ENCODE measurements at regions of chr11 and their contacts with region 1.

Region 1: GRCh38 chr11:118907051-118908042 is 18.4 kb downstream of the BCL9L start:
- DNase-seq: peak; percentile 98
- H3K4me3 ChIP-seq: no peak overlapping the region
- H3K27ac ChIP-seq: peak overlapping the region; percentile 90 to 98 (median 96)
- H3K4me1 ChIP-seq: peaks cover 54 to 77% (median 63%) of the 10 kb centered on the region in 4 donors
- H3K27me3 ChIP-seq: no peaks in the 10 kb centered on the region
- CTCF ChIP-seq: peak; percentile 93 to 97 (median 95)
- EP300 ChIP-seq: no peak
- POLR2A ChIP-seq: no peak

Region 2: DNA sequence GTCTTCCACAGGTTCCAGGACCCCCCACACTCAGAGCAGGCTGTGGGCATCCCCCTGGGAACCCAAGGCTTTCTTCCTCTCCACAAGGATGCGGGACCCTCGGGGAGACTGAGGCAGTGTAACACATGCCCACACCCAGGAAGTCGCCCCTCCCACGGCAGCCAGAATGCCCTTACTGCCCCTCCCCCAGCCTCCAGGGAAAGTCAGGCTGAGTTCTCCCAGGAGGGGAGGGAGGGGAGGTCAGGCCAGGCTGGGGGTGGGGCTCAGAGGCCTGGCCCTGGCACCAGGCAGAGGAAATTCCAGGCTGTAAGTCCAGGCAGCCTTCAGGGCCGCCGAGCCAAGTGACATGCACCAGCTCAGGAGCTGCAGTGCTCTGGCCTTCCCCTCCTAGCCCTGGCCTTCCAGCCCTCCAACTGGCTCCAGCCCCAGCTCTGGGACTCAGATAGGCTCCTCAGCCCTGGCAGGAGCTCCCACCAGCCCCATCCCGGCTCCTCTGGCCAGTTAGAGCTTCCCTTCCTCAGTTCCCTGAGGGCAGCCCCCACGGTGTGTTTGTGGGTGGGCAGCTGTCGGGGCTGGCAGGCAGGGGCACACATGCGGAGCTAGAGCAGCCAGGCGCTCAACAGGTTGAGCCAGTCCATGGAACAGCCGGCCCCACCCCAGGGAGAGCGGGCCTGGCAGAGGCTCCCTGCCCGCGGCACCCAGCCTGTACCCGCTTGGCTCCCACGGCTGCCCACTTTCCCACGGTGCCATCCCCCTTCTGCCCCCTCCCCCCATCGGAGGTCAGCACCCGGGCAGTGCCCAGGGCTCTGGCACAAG is 14.8 kb after region 1 on chr11:
- intact Hi-C with region 1: loop called (anchors 1 kb)
- DNase-seq: no peak
- H3K4me3 ChIP-seq: peak overlapping the region; percentile 93 to 97 (median 94)
- H3K27ac ChIP-seq: peak overlapping the region; percentile 90 to 98 (median 96)
- H3K4me1 ChIP-seq: peaks cover 76 to 87% (median 84%) of the 10 kb centered on the region in 4 donors
- H3K27me3 ChIP-seq: no peaks in the 10 kb centered on the region
- CTCF ChIP-seq: no peak
- EP300 ChIP-seq: no peak
- POLR2A ChIP-seq: peak; percentile 58